ENCODE measurements at regions of chr12 and their contacts with region 1.

Region 1: DNA sequence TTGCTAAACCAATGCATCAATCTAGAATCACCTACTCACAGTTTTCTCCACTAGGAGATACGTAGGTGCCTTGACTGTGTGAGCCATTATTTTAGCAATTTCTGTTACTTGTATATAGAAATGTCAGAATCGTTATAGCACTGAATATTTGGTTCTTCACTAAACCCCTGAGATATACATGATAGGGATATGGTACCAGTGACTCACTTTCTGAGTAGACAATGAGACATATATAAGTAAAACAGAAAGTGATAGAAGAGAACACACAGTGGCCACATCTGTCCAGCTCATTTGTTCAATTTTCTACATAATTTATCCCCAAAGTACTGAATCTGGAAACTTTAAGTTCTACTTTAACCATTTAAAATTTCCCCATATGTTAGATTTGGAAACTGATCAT is 1505.5 kb upstream of the TMEM132C start:
- DNase-seq: no peak
- H3K4me3 Mint-ChIP-seq: no peak overlapping the region
- H3K27ac Mint-ChIP-seq: no peak overlapping the region
- H3K4me1 Mint-ChIP-seq: peaks cover 6% of the 10 kb centered on the region
- H3K27me3 Mint-ChIP-seq: no peaks in the 10 kb centered on the region

Region 2: DNA sequence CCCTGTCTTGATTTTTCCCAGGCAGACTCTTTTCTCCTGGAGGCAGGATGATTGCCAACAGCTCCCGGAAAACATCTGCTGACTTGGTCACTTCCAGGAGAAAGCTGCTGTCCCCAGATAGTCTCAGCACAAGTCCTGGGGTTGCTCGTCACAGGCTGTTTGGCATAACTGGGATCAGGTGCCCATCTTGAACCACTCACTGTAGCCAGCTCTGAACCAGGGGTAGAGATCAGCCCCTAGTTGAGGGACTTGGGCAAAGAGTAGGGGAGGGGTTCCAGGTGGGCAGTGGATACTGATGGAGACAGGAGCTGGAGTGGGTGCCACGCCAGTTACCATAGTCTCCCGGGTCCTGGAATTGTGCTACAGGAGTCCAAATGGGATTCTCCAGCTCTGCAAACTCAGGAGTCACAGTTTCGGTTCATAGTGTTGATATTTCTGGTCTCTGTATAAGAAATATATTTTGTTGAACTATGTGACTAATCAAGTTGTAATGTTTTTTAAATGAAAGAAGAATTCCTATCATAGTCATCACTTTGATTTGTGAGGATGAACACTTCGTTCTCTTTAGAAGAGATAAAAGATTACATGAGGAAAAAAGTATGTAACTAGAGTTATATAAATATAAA is 541.7 kb before region 1 on chr12:
- intact Hi-C with region 1: no loop called
- DNase-seq: no peak
- H3K4me3 Mint-ChIP-seq: no peak overlapping the region
- H3K27ac Mint-ChIP-seq: no peak overlapping the region
- H3K4me1 Mint-ChIP-seq: no peaks in the 10 kb centered on the region
- H3K27me3 Mint-ChIP-seq: no peaks in the 10 kb centered on the region

Region 3: DNA sequence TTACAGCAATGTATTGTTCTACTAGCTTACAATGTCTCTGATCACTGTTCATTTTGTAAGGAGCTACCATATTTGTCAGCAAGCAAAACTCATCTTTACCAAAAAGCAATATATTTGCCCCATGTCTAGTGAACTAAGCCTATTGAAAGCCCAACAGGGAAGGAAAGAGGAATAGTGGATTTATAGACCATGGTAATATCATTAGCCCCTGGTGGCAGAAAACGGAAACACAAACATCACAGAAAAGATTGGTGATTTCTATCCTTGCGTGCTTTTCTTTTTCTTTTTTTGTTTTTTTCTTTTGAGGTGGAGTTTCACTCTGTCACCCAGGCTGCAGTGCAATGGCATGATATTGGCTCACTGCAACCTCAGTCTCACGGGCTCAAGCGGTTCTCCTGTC is 56.8 kb before region 1 on chr12:
- intact Hi-C with region 1: no loop called
- DNase-seq: no peak
- H3K4me3 Mint-ChIP-seq: no peak overlapping the region
- H3K27ac Mint-ChIP-seq: no peak overlapping the region
- H3K4me1 Mint-ChIP-seq: no peaks in the 10 kb centered on the region
- H3K27me3 Mint-ChIP-seq: no peaks in the 10 kb centered on the region

Region 4: GRCh38 chr12:126772171-126772864 is 10.9 kb after region 1 on chr12:
- intact Hi-C with region 1: loop called (anchors 1 kb)
- DNase-seq: peak; percentile 20
- H3K4me3 Mint-ChIP-seq: peak overlapping the region; percentile 85
- H3K27ac Mint-ChIP-seq: peak overlapping the region; percentile 97
- H3K4me1 Mint-ChIP-seq: peaks cover 15% of the 10 kb centered on the region
- H3K27me3 Mint-ChIP-seq: no peaks in the 10 kb centered on the region